Common myeloid progenitor, CD34-positive (primary cell): ENCODE measurements at regions of chr4 and their contacts with region 1.

Region 1: GRCh38 chr4:169810325-169811323 is 52.9 kb upstream of the HPF1 start:
- DNase-seq: peak; percentile 84 to 90 (median 87)
- H3K4me3 ChIP-seq: no peak overlapping the region
- H3K27ac ChIP-seq: no peak overlapping the region
- H3K4me1 ChIP-seq: peaks cover 0 to 4% (median under 1%) of the 10 kb centered on the region in 4 experiments
- H3K27me3 ChIP-seq: no peaks in the 10 kb centered on the region

Region 2: GRCh38 chr4:170011921-170012628 is 201.5 kb after region 1 on chr4:
- CTCF ChIA-PET with region 1: interaction called, 10 read pairs
- POLR2A ChIA-PET with region 1: no interaction called
- DNase-seq: peak in 2 of 3 donors; percentile 72 to 83
- H3K4me3 ChIP-seq: no peak overlapping the region
- H3K27ac ChIP-seq: peak overlapping the region in 1 of 2 experiments; percentile 36
- H3K4me1 ChIP-seq: peaks cover 18 to 57% (median 39%) of the 10 kb centered on the region in 4 experiments
- H3K27me3 ChIP-seq: no peaks in the 10 kb centered on the region

Region 3: GRCh38 chr4:170026253-170027021 is 215.8 kb after region 1 on chr4 and contains the start of gene MFAP3L:
- CTCF ChIA-PET with region 1: interaction called, 10 read pairs
- POLR2A ChIA-PET with region 1: no interaction called
- DNase-seq: peak; percentile 89 to 91 (median 89)
- H3K4me3 ChIP-seq: peak within 1 kb of the TSS; percentile 52 to 91 (median 84)
- H3K27ac ChIP-seq: peak within 1 kb of the TSS in 1 of 2 experiments; percentile 27
- H3K4me1 ChIP-seq: peaks cover 2 to 16% (median 15%) of the 10 kb centered on the region in 4 experiments
- H3K27me3 ChIP-seq: peaks cover 0 to 29% (median 4%) of the 10 kb centered on the region in 5 experiments

Region 4: GRCh38 chr4:170040031-170040680 is 229.5 kb after region 1 on chr4:
- CTCF ChIA-PET with region 1: interaction called, 38 read pairs
- POLR2A ChIA-PET with region 1: no interaction called
- DNase-seq: no peak
- H3K4me3 ChIP-seq: no peak overlapping the region
- H3K27ac ChIP-seq: no peak overlapping the region
- H3K4me1 ChIP-seq: no peaks in the 10 kb centered on the region
- H3K27me3 ChIP-seq: peaks cover 0 to 1% (median 0%) of the 10 kb centered on the region in 5 experiments

Region 5: DNA sequence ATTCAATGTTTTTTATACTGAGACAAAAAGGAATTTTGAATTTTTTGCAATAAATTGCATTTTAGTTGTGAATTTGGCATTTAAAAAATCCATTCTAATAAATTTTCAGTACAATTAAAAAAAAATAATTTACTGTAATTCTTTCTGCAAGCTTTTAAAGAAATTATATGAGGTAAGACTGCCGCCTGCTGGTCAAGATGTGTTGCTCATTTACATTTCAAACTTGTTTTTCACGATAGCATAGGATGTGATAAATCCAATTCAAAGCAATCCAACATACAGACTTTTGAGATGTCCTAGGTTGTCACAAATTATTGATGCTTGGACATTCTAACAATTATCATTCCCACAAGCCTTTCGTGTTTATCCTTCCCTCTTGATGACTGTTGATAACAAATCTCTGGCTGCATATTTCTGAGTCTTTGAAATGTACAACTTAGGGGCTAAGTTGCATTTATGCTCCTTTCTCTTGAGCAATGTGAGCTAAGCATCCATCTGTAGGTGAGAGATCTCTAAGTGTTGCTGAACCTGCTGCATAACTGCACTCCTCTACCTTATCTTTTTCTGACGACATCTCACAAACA is 237.2 kb after region 1 on chr4:
- CTCF ChIA-PET with region 1: interaction called, 38 read pairs
- POLR2A ChIA-PET with region 1: no interaction called
- DNase-seq: peak; percentile 75 to 91 (median 84)
- H3K4me3 ChIP-seq: no peak overlapping the region
- H3K27ac ChIP-seq: no peak overlapping the region
- H3K4me1 ChIP-seq: no peaks in the 10 kb centered on the region
- H3K27me3 ChIP-seq: no peaks in the 10 kb centered on the region